ENCODE measurements at regions of chr11 and their contacts with region 1.

Region 1: DNA sequence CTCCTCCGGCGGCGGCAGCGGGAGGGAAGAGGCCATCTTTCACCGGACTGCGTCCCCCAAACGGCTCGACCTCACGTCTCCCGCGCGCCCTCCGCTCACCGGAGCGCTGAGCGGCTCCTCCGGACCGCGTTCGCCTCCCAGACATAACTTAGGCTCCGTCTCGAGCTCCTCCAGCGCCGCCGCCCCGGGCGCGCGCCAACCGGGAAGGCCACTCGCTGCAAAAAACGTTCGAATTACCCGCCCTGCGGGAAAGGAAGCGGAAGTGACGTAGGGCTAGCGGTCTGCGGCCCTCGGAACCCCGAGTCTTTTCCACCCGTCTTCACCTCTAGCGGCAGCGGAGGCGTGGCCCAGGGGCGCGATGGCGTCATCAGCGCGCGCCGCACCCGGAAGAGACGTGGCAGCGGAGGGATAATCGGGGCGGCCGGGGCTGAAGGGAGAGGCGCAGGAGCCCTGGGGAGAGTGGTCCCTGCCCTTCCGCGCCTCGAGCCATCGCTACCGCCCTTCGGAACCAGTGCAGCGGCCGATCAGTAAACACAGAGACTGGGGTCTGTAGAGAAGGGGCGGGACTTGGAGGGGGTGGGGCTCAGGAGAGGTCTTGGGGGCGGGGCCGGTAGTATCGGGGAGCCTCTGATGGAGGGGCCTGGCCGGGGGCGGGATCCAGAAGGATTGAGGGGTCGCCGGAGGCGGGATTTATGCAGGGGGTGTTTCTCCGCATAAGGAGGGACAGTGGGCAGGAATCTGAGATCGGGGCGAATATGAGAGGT is at the starts of genes CDCA5 and ZFPL1:
- DNase-seq: peak; percentile 97
- ATAC-seq: peak; percentile 84
- H3K4me3 Mint-ChIP-seq: peak within 1 kb of the TSS; percentile 92
- H3K27ac Mint-ChIP-seq: peak within 1 kb of the TSS; percentile 98
- H3K4me1 Mint-ChIP-seq: peaks cover 52% of the 10 kb centered on the region
- H3K27me3 Mint-ChIP-seq: no peaks in the 10 kb centered on the region
- total RNA-seq, gene CDCA5: 127 to 129 TPM
- total RNA-seq, gene ZFPL1: 28.0 to 28.8 TPM

Region 2: DNA sequence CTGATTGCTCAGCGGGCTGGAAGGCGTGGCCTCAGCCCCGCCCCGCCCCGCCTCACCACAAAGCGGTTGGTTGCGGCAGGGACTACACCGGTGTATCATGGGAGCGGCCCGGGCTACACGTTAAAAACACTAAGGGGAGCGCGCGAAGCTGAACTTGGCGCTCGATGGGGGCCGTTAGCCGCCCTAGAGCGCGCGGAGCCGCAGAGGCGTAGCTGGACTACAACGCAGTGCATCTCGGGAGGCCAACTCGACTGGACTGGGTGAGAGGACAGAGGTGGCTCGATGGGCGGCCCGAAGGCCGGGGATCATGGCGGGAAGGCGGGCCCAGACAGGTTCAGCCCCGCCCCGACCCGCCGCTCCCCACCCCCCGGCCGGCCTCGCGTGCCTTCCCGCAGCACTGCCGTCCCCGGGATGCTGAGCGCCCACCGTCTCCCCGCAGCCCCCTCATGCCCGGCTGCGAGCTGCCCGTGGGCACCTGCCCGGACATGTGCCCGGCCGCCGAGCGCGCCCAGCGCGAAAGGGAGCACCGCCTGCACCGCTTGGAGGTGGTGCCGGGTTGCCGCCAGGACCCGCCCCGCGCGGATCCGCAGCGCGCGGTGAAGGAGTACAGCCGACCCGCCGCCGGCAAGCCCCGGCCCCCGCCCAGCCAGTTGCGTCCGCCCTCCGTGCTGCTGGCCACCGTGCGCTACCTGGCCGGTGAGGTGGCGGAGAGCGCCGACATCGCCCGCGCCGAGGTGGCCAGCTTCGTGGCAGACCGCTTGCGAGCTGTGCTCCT is 43.0 kb before region 1 on chr11 and contains the start of gene SAC3D1:
- CTCF ChIA-PET with region 1: interaction called, 4 read pairs
- POLR2A ChIA-PET with region 1: interaction called, 19 read pairs
- DNase-seq: peak; percentile 97
- ATAC-seq: peak; percentile 95
- H3K4me3 Mint-ChIP-seq: peak within 1 kb of the TSS; percentile 88
- H3K27ac Mint-ChIP-seq: peak within 1 kb of the TSS; percentile 95
- H3K4me1 Mint-ChIP-seq: peaks cover 35% of the 10 kb centered on the region
- H3K27me3 Mint-ChIP-seq: no peaks in the 10 kb centered on the region
- total RNA-seq, gene SAC3D1: 36.3 to 36.6 TPM

Region 3: DNA sequence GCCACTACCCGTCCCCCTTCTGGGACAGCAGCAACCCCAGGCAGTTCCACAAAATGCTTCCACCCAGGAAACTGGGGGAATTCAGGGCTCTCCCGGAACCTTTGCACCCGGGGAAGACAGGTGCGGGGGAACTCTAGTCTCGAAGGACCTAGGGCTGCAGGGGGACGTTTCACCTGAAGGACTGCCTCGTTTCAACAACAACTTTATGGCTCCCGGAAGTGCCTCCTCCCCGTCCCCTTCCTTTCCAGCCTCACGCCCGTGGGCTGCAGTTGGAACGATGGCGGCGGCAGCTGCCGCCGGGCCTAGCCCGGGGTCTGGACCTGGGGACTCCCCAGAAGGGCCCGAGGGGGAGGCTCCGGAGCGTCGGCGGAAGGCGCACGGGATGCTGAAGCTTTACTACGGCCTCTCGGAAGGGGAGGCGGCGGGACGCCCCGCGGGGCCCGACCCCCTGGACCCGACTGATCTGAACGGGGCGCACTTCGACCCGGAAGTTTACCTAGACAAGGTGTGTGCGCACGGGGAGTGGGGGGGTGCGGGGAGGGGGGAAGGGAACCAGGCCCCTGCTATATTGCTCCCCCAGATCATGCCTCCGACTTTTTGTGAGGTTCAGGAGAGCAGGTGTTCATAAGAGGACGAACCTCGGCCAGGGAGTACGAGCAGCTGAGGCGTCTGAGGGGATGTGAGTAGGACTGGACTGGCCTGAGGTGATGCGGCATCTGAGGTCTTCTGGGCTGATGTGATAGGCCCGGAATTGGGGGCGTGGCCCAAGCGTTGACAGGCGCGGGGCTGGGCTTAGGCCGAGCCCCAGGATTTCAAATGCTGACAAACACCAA is 12.2 kb after region 1 on chr11 and contains the start of gene VPS51:
- CTCF ChIA-PET with region 1: interaction called, 9 read pairs
- POLR2A ChIA-PET with region 1: interaction called, 18 read pairs
- DNase-seq: peak; percentile 92
- ATAC-seq: peak; percentile 97
- H3K4me3 Mint-ChIP-seq: peak within 1 kb of the TSS; percentile 93
- H3K27ac Mint-ChIP-seq: peak within 1 kb of the TSS; percentile 98
- H3K4me1 Mint-ChIP-seq: peaks cover 20% of the 10 kb centered on the region
- H3K27me3 Mint-ChIP-seq: no peaks in the 10 kb centered on the region
- total RNA-seq, gene VPS51: 116 to 131 TPM

Region 4: DNA sequence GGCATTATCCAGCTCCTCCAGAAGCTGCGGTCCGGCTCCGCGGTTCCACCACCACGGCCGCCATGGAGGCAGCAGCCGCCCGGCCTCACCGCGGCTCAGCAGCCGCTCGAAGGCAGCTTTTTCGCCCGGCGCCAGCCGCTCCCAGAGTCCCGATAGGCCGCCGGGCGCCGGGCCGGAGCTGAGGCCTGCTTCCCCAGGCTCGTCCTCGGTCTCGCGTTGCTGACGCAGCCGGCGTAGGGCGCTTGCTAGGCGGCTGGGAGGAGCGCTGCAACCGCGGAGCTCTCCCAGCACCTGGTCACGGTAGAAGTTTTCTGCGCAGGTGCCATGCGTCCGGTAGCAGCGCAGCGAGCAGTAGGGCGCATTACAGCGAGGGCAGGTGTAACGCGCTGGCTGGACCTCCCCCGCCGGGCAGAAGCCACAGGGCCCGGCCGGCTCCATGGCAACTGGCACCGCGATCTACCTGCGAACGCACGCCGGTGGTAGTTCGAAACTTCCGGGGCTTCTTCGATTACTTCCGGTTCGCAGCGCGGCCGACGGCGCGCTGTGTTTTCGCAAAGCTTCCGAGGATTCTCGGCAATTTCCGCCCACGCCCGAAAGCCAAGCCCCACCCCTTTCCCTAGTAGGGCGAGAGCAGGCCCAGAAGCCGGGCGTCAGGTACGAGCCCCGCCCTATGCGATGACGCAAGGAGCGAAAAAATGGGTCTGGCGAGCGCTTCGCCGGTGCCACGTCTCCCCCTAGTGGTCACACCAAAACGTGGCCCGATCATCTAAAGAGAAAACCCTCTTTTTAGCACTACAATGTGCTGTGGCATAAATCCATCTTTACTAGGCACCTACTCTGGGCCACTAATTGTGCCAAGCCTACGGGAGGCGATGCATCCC is 33.4 kb after region 1 on chr11 and contains the start of gene ZNHIT2:
- CTCF ChIA-PET with region 1: interaction called, 7 read pairs
- POLR2A ChIA-PET with region 1: interaction called, 12 read pairs
- DNase-seq: peak; percentile 100
- ATAC-seq: peak; percentile 66
- H3K4me3 Mint-ChIP-seq: peak within 1 kb of the TSS; percentile 90
- H3K27ac Mint-ChIP-seq: peak within 1 kb of the TSS; percentile 97
- H3K4me1 Mint-ChIP-seq: peaks cover 63% of the 10 kb centered on the region
- H3K27me3 Mint-ChIP-seq: no peaks in the 10 kb centered on the region
- total RNA-seq, gene ZNHIT2: 11.6 to 12.4 TPM